Aorta (tissue), 5 donors: ENCODE measurements at regions of chr2 and their contacts with region 1.

Region 1: DNA sequence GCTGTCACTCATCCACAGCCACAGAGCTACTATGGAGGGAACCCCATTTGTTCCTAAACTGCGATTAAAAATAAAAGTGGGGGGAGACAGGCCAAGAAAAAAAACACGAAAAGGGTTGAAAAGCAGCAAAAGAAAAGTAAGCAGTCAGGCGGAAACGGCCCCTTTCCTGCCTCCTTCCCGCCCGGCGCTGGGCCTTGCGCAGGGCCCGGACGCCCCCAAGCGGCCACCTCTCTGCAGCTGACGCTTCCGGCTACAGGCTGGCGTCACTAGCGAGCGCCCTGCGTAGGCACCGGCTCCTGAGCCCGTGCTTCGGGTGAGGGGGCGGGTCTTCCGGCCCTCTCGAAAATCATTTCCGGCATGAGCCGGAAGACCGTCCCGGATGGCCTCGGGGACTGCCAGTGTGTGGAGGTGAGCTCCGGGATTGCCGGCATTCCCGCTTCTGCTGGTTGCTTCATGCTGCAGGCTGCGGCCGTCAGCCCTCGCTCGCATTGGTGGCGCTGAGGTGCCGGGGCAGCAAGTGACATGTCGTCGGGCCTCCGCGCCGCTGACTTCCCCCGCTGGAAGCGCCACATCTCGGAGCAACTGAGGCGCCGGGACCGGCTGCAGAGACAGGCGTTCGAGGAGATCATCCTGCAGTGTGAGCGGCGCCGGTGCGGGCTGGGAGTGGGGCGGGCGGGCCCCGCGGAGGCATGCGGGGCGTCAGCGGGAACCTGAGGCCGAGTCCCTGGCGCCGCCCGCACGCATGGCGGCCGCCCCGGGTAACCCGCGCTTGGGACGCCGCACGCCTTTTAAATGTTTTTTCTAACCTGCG is at the start of gene ATG16L1:
- DNase-seq: peak; percentile 98 to 99
- ATAC-seq: peak; percentile 100
- H3K4me3 ChIP-seq: peak within 1 kb of the TSS; percentile 79 to 80
- H3K27ac ChIP-seq: peak within 1 kb of the TSS in 1 of 2 donors; percentile 96
- H3K4me1 ChIP-seq: no peaks in the 10 kb centered on the region
- H3K27me3 ChIP-seq: no peaks in the 10 kb centered on the region
- total RNA-seq, gene ATG16L1: 20.5 to 30.1 TPM

Region 2: DNA sequence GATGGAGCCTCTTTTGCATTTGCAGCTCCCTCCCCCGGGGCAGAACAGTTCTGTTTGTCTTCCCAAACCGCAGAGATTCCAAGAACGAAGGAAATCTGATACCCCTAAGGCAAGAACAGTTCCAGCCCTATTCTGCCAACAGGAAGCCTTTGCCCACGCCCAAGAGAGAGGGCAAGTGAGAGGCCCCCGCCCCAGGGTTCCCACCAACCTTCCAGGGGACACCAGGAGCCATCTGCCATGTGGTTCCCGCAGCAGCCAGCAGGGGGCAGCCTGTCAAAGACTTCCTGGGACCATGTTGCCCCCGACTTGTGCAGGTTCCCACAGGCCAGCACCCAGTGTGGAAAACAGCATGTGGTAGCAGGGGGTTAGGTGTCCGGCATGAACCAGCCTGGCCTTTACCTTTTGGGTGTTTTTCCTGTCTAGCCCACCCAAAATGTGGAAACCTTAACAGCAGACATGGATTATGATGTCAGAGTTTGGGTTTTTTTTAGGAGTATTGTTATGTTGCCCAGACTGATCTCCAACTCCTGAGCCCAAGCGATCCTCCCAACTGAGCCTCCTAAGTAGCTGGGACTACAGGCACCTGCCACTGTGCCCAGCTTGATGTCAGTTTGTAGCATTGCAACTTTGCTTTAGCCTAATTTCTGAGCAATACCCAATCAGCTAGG is 639.8 kb before region 1 on chr2:
- intact Hi-C with region 1: loop called in 1 of 2 experiments (anchors 5 kb)
- DNase-seq: peak; percentile 77 to 93
- ATAC-seq: peak; percentile 79
- H3K4me3 ChIP-seq: no peak overlapping the region
- H3K27ac ChIP-seq: no peak overlapping the region
- H3K4me1 ChIP-seq: no peaks in the 10 kb centered on the region
- H3K27me3 ChIP-seq: no peaks in the 10 kb centered on the region

Region 3: DNA sequence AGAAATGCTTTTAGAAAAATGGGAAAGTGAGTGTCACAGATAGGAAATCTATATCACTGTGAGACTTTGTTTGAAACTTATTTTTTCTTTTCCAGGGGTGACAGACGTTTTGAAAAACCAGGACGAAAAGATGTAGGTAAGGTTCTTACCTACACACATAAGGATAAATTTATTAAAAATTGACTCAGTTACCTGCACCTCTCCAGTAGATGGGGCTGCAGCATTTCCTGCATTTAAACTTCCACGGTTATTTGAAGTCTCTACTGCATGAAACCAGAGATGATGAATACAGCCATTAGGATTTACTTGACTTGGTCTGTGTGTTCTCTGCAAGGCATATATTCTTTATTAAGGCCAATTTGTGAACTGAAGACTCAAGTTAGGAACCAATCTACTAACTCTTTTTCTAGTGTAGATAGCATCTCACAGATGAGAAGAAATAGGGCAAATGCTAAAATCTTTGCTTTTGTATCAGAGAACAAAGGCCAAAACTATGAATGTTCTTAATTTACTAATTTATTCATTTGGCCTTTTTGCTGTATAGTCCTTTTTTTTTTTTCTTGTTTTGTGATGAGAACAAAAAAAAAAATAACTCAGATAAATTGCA is 490.1 kb before region 1 on chr2:
- intact Hi-C with region 1: loop called in 1 of 2 experiments (anchors 10 kb)
- DNase-seq: no peak
- ATAC-seq: no peak
- H3K4me3 ChIP-seq: no peak overlapping the region
- H3K27ac ChIP-seq: no peak overlapping the region
- H3K4me1 ChIP-seq: no peaks in the 10 kb centered on the region
- H3K27me3 ChIP-seq: no peaks in the 10 kb centered on the region

Region 4: DNA sequence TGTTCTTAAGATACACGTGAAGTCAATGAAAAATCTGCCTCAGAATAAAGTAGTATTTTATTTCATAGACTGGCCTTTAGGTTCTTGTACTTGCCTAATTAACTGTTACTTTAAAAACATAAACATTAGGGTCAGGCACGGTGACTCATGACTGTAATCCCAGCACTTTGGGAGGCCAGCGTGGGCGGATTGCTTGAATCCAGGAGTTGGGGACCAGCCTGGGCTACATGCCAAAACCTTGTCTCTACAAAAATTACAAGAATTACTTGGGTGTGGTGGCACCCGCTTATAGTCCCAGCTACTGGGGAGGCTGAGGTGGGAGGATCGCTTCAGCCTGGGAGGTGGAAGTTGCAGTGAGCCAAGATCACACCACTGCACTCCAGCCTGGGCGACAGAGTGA is 397.4 kb before region 1 on chr2:
- intact Hi-C with region 1: loop called (anchors 2 to 5 kb)
- DNase-seq: no peak
- ATAC-seq: no peak
- H3K4me3 ChIP-seq: no peak overlapping the region
- H3K27ac ChIP-seq: no peak overlapping the region
- H3K4me1 ChIP-seq: no peaks in the 10 kb centered on the region
- H3K27me3 ChIP-seq: no peaks in the 10 kb centered on the region

Region 5: GRCh38 chr2:233053928-233054784 is 197.4 kb before region 1 on chr2:
- intact Hi-C with region 1: loop called in 1 of 2 experiments (anchors 5 kb)
- DNase-seq: peak; percentile 65 to 88
- ATAC-seq: no peak
- H3K4me3 ChIP-seq: no peak overlapping the region
- H3K27ac ChIP-seq: no peak overlapping the region
- H3K4me1 ChIP-seq: no peaks in the 10 kb centered on the region
- H3K27me3 ChIP-seq: no peaks in the 10 kb centered on the region

Region 6: GRCh38 chr2:233098615-233099014 is 152.9 kb before region 1 on chr2:
- intact Hi-C with region 1: loop called in 1 of 2 experiments (anchors 2 kb)
- DNase-seq: peak in 1 of 2 donors; percentile 73
- ATAC-seq: no peak
- H3K4me3 ChIP-seq: no peak overlapping the region
- H3K27ac ChIP-seq: no peak overlapping the region
- H3K4me1 ChIP-seq: no peaks in the 10 kb centered on the region
- H3K27me3 ChIP-seq: no peaks in the 10 kb centered on the region